ENCODE measurements at regions of chr11 and their contacts with region 1.

Region 1: DNA sequence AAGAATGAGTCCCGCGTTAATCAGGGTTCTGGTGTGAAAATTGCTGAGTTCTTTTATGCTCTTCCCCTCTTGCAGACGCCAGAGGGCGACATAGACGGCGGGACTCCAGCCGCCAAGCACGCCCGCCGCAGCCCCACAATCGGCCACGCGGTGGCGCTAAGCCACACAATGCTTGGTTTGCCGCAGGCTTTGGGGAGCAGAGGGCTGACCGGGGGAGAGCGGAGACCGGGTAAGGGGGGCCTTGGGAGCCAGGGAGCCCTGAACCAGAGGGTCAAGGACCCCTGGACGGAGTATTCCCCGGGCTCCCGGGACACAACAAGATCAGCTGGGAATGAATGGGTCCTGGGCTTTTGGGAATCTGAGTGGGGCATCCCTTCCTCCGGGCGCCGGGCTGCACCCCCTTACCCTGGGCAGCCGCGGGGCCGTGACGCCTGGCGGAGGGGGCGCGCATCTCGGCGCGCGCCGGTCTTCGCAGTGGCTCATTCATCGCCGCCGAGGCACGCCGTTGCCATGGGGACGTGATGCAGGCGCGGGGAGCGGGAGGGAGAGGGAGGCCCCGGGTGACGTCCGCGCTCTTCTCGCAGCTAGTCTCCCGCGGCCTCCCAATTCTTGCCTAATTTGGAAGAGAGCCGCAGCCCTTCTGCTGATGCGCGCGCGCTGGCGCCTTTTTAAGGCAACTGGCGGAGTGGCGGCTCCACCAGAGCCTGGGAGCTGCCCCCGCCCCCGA is 12.2 kb upstream of the NPAS4 start:
- DNase-seq: peak; percentile 85
- H3K4me3 ChIP-seq: no peak overlapping the region
- H3K27ac ChIP-seq: no peak overlapping the region
- H3K4me1 ChIP-seq: peaks cover 4% of the 10 kb centered on the region
- CTCF ChIP-seq: peak; percentile 100

Region 2: GRCh38 chr11:66429983-66430602 is 21.4 kb after region 1 on chr11:
- CTCF ChIA-PET with region 1: interaction called, 3 read pairs
- POLR2A ChIA-PET with region 1: no interaction called
- intact Hi-C with region 1: loop called (anchors 1 kb)
- DNase-seq: peak; percentile 73
- H3K4me3 ChIP-seq: no peak overlapping the region
- H3K27ac ChIP-seq: no peak overlapping the region
- H3K4me1 ChIP-seq: no peaks in the 10 kb centered on the region
- CTCF ChIP-seq: peak; percentile 93

Region 3: GRCh38 chr11:66579017-66579606 is 170.5 kb after region 1 on chr11:
- CTCF ChIA-PET with region 1: no interaction called
- POLR2A ChIA-PET with region 1: no interaction called
- intact Hi-C with region 1: loop called (anchors 5 kb)
- DNase-seq: peak; percentile 73
- H3K4me3 ChIP-seq: no peak overlapping the region
- H3K27ac ChIP-seq: no peak overlapping the region
- H3K4me1 ChIP-seq: no peaks in the 10 kb centered on the region
- CTCF ChIP-seq: peak; percentile 91

Measured in OCI-LY7 (cell line).